Activated T-helper 1 cell treated with anti-CD3 and anti-CD28 coated beads, Interleukin-12 subunit alpha, Interleukin-12 subunit beta, Interleukin-2, Interleukin-4 antibody, amounts not matched to agents 30 ng/mL and 10 ng/mL and 1 ng/mL, durations not matched to agents 14 hours and 24 hours and 36 hours (primary cell): ENCODE measurements at regions of chr18 and their contacts with region 1.

Region 1: GRCh38 chr18:36432880-36433279 is 135.4 kb downstream of the FHOD3 start:
- DNase-seq: no peak
- H3K4me3 Mint-ChIP-seq: no peak overlapping the region
- H3K27ac Mint-ChIP-seq: no peak overlapping the region
- H3K4me1 Mint-ChIP-seq: no peaks in the 10 kb centered on the region
- H3K27me3 Mint-ChIP-seq: peaks cover 1% of the 10 kb centered on the region

Region 2: GRCh38 chr18:36419905-36420531 is 12.9 kb before region 1 on chr18:
- intact Hi-C with region 1: no loop called
- DNase-seq: no peak
- H3K4me3 Mint-ChIP-seq: no peak overlapping the region
- H3K27ac Mint-ChIP-seq: no peak overlapping the region
- H3K4me1 Mint-ChIP-seq: peaks cover 5% of the 10 kb centered on the region
- H3K27me3 Mint-ChIP-seq: peaks cover 3% of the 10 kb centered on the region

Region 3: GRCh38 chr18:36459203-36459602 is 26.3 kb after region 1 on chr18:
- intact Hi-C with region 1: loop called (anchors 1 kb)
- DNase-seq: no peak
- H3K4me3 Mint-ChIP-seq: no peak overlapping the region
- H3K27ac Mint-ChIP-seq: no peak overlapping the region
- H3K4me1 Mint-ChIP-seq: no peaks in the 10 kb centered on the region
- H3K27me3 Mint-ChIP-seq: peaks cover 1% of the 10 kb centered on the region